ENCODE measurements at regions of chr15 and their contacts with region 1.

Region 1: GRCh38 chr15:59595434-59595915 is 16.1 kb upstream of the GCNT3 start:
- DNase-seq: no peak
- H3K4me3 ChIP-seq: no peak overlapping the region
- H3K27ac ChIP-seq: no peak overlapping the region
- H3K4me1 ChIP-seq: peaks cover 13% of the 10 kb centered on the region
- H3K27me3 ChIP-seq: no peaks in the 10 kb centered on the region
- CTCF ChIP-seq: no peak

Region 2: DNA sequence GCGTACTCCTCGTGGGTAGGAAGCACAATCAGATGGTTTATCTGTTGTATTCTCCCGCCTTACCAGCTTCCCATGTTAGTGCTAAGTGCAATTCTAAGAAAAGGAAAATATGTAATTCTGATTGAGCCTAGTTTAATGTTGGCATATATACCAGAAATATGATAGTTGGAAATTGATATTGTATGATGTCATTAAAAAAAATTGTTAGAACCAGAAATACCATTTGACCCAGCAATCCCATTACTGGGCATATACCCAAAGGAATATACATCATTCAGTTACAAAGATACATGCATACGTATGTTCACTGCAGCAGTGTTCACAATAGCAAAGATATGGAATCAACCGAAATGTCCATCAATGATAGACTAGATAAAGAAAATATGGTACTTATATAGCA is 82.0 kb before region 1 on chr15:
- CTCF ChIA-PET with region 1: no interaction called
- dilution Hi-C with region 1: loop called (anchors 5 kb)
- in situ Hi-C with region 1: no loop called
- intact Hi-C with region 1: no loop called
- DNase-seq: no peak
- H3K4me3 ChIP-seq: no peak overlapping the region
- H3K27ac ChIP-seq: no peak overlapping the region
- H3K4me1 ChIP-seq: no peaks in the 10 kb centered on the region
- H3K27me3 ChIP-seq: peaks cover 2% of the 10 kb centered on the region
- CTCF ChIP-seq: no peak